ENCODE measurements at regions of chr21 and their contacts with region 1.

Region 1: DNA sequence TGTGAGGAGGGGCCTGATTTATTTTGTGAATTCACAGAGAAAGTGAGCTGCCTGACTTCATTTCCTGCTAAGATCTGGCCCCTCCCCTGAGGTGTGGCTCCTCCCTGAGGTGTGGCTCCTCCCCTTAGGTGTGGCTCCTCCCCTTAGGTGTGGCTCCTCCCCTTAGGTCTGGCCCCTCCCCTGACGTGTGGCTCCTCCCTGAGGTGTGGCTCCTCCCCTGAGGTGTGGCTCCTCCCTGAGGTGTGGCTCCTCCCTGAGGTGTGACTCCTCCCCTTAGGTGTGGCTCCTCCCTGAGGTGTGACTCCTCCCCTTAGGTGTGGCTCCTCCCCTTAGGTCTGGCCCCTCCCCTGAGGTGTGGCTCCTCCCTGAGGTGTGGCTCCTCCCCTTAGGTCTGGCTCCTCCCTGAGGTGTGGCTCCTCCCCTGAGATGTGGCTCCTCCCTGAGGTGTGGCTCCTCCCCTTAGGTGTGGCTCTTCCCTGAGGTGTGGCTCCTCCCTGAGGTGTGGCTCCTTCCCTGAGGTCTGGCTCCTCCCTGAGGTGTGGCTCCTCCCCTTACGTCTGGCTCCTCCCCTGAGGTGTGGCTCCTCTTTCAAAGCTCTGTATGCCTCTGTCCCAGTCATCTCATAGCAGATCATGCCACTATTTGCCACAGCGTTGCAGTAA is 26.9 kb upstream of the LRRC3 start:
- DNase-seq: peak; percentile 71
- ATAC-seq: peak; percentile 77
- H3K4me3 Mint-ChIP-seq: no peak overlapping the region
- H3K27ac Mint-ChIP-seq: no peak overlapping the region
- H3K4me1 Mint-ChIP-seq: no peaks in the 10 kb centered on the region
- H3K27me3 Mint-ChIP-seq: no peaks in the 10 kb centered on the region

Region 2: GRCh38 chr21:44454747-44455523 is 26.5 kb after region 1 on chr21 and contains the start of gene LRRC3:
- CTCF ChIA-PET with region 1: no interaction called
- POLR2A ChIA-PET with region 1: interaction called, 7 read pairs
- intact Hi-C with region 1: loop called (anchors 1 kb)
- DNase-seq: peak; percentile 95
- ATAC-seq: peak; percentile 74
- H3K4me3 Mint-ChIP-seq: peak within 1 kb of the TSS; percentile 67
- H3K27ac Mint-ChIP-seq: no peak within 1 kb of the TSS
- H3K4me1 Mint-ChIP-seq: no peaks in the 10 kb centered on the region
- H3K27me3 Mint-ChIP-seq: peaks cover 15% of the 10 kb centered on the region
- total RNA-seq, gene LRRC3: 2.7 to 2.9 TPM

Region 3: DNA sequence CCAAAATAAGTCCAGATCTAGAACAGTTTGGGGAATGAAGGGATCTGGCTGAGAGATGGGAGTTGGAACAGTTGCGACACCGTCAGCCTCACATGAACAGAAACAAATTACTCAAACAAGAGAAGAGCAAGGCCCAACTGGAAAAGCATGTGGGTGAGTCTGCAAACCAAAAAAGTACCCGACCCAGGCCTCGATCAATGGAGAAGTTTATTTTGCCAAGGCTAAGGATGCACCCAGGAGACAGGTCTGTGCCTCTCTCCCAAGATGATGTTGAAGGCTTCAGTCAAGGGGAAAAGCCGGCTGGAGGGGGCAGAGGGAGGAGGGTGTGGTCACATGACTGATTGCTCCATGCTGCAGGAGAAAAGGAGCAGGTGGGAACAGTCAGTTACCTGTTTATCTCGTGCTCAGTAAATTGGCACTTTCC is 69.3 kb after region 1 on chr21:
- CTCF ChIA-PET with region 1: no interaction called
- POLR2A ChIA-PET with region 1: no interaction called
- intact Hi-C with region 1: loop called in 1 of 2 experiments (anchors 10 kb)
- DNase-seq: no peak
- ATAC-seq: no peak
- H3K4me3 Mint-ChIP-seq: no peak overlapping the region
- H3K27ac Mint-ChIP-seq: no peak overlapping the region
- H3K4me1 Mint-ChIP-seq: no peaks in the 10 kb centered on the region
- H3K27me3 Mint-ChIP-seq: peaks cover 3% of the 10 kb centered on the region